ENCODE measurements at regions of chr1 and their contacts with region 1.

Region 1: GRCh38 chr1:7667625-7668218 is 103.4 kb upstream of the VAMP3 start:
- H3K4me3 ChIP-seq: no peak overlapping the region
- H3K27ac ChIP-seq: no peak overlapping the region
- H3K4me1 ChIP-seq: no peaks in the 10 kb centered on the region
- CTCF ChIP-seq: peak; percentile 98

Region 2: GRCh38 chr1:7652515-7653098 is 15.1 kb before region 1 on chr1:
- CTCF ChIA-PET with region 1: interaction called, 22 read pairs
- POLR2A ChIA-PET with region 1: no interaction called
- H3K4me3 ChIP-seq: no peak overlapping the region
- H3K27ac ChIP-seq: no peak overlapping the region
- H3K4me1 ChIP-seq: no peaks in the 10 kb centered on the region
- CTCF ChIP-seq: no peak

Region 3: DNA sequence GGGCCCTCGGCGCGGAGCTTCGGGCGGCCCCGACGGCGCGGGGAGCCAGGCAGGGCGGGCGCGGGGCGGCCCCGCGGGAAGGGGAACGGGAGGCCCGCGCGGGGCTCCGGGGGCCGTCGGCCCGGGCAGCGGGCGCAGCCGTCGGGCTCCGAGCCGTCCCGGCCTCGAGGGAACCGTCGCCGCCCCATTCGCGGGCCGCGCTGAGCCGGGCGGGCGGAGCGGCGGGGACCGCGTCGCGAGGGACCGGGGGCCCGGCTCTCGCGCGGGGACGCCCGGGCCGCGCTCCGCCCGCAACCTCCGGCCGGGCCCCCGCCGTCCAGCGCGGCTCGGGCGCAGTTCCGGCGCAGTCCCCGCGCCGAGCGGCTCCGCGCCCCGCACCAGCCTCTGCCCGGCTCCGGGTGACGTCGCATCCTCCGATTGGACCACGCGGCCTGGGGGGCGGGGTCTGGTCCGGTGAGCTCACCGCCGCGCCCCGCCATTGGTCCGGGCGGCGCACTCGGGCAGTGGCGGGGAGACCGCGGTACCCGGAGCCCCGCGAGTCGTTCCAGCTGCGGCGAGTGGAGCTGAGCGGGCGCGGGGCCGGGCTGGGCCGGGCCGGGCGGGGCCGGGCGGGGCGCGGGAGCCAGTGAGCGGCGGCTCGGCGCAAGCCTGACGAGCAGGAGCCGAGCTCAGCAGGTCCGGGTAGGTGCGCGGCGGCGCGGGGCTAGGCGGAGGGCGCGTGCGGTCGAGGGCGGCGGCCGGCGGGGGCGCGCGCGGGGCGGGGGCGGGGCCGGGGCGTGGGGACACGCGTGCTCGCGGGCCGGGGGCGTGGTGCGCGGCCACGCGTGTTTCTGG is 36.7 kb after region 1 on chr1:
- CTCF ChIA-PET with region 1: interaction called, 11 read pairs
- POLR2A ChIA-PET with region 1: no interaction called
- H3K4me3 ChIP-seq: peak overlapping the region; percentile 78
- H3K27ac ChIP-seq: peak overlapping the region; percentile 46; the same call in 1 of the 2 replicates
- H3K4me1 ChIP-seq: no peaks in the 10 kb centered on the region
- CTCF ChIP-seq: no peak

Region 4: GRCh38 chr1:7745791-7746190 is 78.1 kb after region 1 on chr1:
- CTCF ChIA-PET with region 1: interaction called, 519 read pairs
- POLR2A ChIA-PET with region 1: no interaction called
- H3K4me3 ChIP-seq: no peak overlapping the region
- H3K27ac ChIP-seq: no peak overlapping the region
- H3K4me1 ChIP-seq: no peaks in the 10 kb centered on the region
- CTCF ChIP-seq: no peak

Region 5: DNA sequence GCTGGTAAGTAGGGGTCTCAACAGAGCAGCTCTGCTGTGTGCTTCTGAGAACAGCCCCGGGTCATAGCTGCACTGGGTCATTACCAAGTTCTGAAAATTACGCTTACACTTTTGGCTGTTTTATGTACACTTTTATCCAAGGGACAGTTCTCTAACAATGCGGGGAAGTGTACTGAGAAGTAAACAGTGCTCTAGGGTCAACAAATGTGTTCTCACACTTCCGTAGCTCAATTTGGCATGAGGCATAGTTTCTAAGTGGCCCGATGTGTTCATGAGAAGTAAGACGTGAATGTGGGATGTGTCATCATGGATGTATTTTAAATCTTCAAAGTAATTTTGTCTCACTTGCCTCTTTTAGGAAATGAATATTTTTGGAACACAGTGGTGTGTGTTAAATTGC is 92.5 kb after region 1 on chr1:
- CTCF ChIA-PET with region 1: interaction called, 519 read pairs
- POLR2A ChIA-PET with region 1: interaction called, 7 read pairs
- H3K4me3 ChIP-seq: no peak overlapping the region
- H3K27ac ChIP-seq: no peak overlapping the region
- H3K4me1 ChIP-seq: no peaks in the 10 kb centered on the region
- CTCF ChIP-seq: no peak

Region 6: GRCh38 chr1:7902478-7903085 is 234.9 kb after region 1 on chr1:
- CTCF ChIA-PET with region 1: interaction called, 10 read pairs
- POLR2A ChIA-PET with region 1: no interaction called
- H3K4me3 ChIP-seq: no peak overlapping the region
- H3K27ac ChIP-seq: no peak overlapping the region
- H3K4me1 ChIP-seq: no peaks in the 10 kb centered on the region
- CTCF ChIP-seq: peak; percentile 83

Measured in HEK293 (cell line).